MCF 10A (cell line): ENCODE measurements at regions of chr4 and their contacts with region 1.

Region 1: GRCh38 chr4:168604496-168605373 is 107.9 kb downstream of the PALLD start:
- DNase-seq: peak; percentile 94
- H3K4me3 Mint-ChIP-seq: no peak overlapping the region
- H3K27ac Mint-ChIP-seq: peak overlapping the region; percentile 4
- H3K4me1 Mint-ChIP-seq: peaks cover 45% of the 10 kb centered on the region
- H3K27me3 Mint-ChIP-seq: no peaks in the 10 kb centered on the region
- CTCF ChIP-seq: no peak

Region 2: DNA sequence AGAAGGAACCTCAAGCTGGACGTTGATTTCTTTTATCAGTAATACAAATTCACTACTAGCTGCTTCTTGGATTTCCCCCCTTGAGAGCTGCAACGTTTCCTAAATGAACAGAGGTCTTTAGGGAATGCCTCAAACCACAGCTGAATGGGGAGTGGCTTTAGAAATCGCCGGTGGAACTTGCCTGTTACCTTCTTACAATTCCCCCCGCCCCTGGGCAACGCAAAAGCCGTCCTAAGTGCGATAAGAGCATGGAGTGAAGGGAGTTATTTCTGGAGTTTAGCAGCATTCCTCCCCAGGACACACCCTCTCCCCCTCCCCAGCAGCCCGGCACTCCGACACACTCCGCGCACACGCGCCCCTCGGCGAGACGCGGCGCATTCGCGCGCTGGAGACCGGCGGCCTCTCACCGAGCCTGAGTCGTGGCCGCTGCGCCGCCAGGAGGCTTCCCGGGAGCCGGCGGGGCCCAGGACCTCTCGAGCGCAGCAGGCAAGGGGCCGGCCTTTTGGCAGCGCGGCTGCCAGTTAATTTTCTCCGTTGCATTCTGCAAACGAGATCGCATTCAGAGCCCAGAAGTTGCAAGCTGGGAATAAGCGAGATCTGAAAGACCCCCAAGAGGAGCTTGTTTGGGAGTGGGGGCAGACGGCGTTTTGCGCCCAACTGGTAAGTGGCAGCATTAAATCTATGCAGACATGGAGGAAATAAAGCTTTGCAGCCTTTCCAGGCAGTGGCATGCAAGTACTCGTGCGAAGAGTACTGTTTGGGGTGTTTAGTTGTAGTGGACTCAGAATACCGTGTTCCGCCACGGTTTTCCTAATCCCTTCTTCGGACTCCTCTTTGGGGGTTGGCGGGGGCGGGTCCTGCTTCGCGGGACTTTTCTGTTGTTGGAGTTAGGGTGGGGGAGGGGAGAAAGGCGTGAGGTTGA is 26.8 kb after region 1 on chr4:
- CTCF ChIA-PET with region 1: interaction called, 3 read pairs
- POLR2A ChIA-PET with region 1: interaction called, 15 read pairs
- intact Hi-C with region 1: no loop called
- DNase-seq: peak; percentile 69
- H3K4me3 Mint-ChIP-seq: peak overlapping the region; percentile 79
- H3K27ac Mint-ChIP-seq: peak overlapping the region; percentile 24
- H3K4me1 Mint-ChIP-seq: peaks cover 41% of the 10 kb centered on the region
- H3K27me3 Mint-ChIP-seq: no peaks in the 10 kb centered on the region
- CTCF ChIP-seq: peak; percentile 26

Region 3: DNA sequence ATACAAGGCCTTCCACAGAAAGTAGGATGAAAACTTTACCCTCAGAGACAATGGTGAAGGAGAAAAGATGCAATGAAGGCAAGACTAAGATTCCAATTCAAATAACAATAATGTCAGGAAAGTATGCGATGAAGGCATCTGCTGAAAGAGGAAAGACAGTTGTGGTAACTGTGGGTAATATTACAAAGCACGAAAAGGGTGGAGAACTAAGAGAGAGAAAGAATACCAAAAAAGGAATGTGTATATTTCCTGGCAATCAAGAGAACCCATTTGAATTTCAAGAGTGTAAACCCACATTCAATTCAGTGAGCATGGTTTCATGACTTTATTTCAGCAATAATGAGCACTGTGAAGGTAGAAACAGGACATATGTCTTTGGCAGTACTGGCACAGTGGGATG is 117.7 kb after region 1 on chr4:
- CTCF ChIA-PET with region 1: no interaction called
- POLR2A ChIA-PET with region 1: no interaction called
- intact Hi-C with region 1: no loop called
- DNase-seq: no peak
- H3K4me3 Mint-ChIP-seq: no peak overlapping the region
- H3K27ac Mint-ChIP-seq: peak overlapping the region; percentile 35
- H3K4me1 Mint-ChIP-seq: peaks cover 27% of the 10 kb centered on the region
- H3K27me3 Mint-ChIP-seq: no peaks in the 10 kb centered on the region
- CTCF ChIP-seq: no peak